ENCODE measurements at regions of chr17 and their contacts with region 1.

Region 1: DNA sequence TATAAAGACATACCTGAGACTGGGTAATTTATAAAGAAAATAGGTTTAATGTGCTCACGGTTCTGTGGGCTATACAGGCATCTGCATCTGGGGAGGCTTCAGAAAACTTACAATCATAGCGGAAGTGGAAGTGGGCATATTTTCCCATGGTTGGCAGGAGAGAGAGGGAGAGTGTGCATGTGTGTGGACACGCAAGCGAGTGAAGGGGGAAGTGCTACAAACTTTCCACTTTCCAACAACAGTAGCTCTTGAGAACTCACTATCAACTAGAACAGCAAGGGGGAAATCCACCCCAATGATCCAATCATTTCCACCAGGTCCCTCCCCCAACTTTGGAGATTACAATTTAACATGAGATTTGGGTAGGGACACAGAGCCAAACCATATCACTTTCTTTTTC is 11.1 kb downstream of the TAOK1 start:
- DNase-seq: no peak
- H3K4me3 Mint-ChIP-seq: no peak overlapping the region
- H3K27ac Mint-ChIP-seq: no peak overlapping the region
- H3K4me1 Mint-ChIP-seq: no peaks in the 10 kb centered on the region
- H3K27me3 Mint-ChIP-seq: no peaks in the 10 kb centered on the region
- CTCF ChIP-seq: no peak

Region 2: DNA sequence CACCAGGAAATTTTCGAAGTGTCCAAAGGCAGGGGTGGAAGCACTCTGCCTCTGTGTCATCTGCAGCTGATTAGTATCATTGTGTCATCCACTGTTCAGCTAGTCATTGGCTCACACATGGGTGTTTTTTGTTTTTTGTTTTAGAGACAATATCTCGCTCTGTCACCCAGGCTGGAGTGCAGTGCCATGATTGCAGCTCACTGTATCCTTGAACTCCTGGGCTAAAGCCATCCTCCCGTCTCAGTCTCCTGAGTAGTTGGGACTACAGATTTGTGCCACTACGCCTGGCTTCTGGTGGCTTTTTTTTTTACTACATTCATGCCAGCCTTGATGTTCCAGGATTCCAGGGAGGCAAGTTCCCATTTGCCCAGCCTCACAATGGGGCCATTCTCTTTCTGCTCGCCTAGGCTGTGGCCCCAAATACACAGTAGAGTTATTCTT is 188.6 kb before region 1 on chr17:
- CTCF ChIA-PET with region 1: no interaction called
- intact Hi-C with region 1: no loop called
- DNase-seq: no peak
- H3K4me3 Mint-ChIP-seq: no peak overlapping the region
- H3K27ac Mint-ChIP-seq: no peak overlapping the region
- H3K4me1 Mint-ChIP-seq: no peaks in the 10 kb centered on the region
- H3K27me3 Mint-ChIP-seq: peaks cover 10% of the 10 kb centered on the region
- CTCF ChIP-seq: no peak

Region 3: GRCh38 chr17:29514792-29515191 is 113.5 kb after region 1 on chr17:
- CTCF ChIA-PET with region 1: interaction called, 10 read pairs
- intact Hi-C with region 1: no loop called
- DNase-seq: no peak
- H3K4me3 Mint-ChIP-seq: no peak overlapping the region
- H3K27ac Mint-ChIP-seq: no peak overlapping the region
- H3K4me1 Mint-ChIP-seq: no peaks in the 10 kb centered on the region
- H3K27me3 Mint-ChIP-seq: no peaks in the 10 kb centered on the region
- CTCF ChIP-seq: no peak

Measured in Calu3 (cell line).